ENCODE measurements at regions of chr2 and their contacts with region 1.

Region 1: GRCh38 chr2:191013932-191014652 is at the start of gene STAT1:
- DNase-seq: peak; percentile 93
- ATAC-seq: peak; percentile 94
- H3K4me3 ChIP-seq: peak within 1 kb of the TSS; percentile 82
- H3K27ac ChIP-seq: peak within 1 kb of the TSS; percentile 82
- H3K4me1 ChIP-seq: peaks cover 12% of the 10 kb centered on the region
- H3K27me3 ChIP-seq: no peaks in the 10 kb centered on the region
- CTCF ChIP-seq: no peak
- POLR2A ChIP-seq: peak; percentile 96
- RAD21 ChIP-seq: peak; percentile 30; the same call in 1 of the 2 replicates
- total RNA-seq, gene STAT1: 67.9 and 80.3 TPM in 2 replicates

Region 2: GRCh38 chr2:191150600-191151330 is 136.7 kb after region 1 on chr2 and contains the start of gene STAT4:
- CTCF ChIA-PET with region 1: no interaction called
- POLR2A ChIA-PET with region 1: no interaction called
- dilution Hi-C with region 1: no loop called
- in situ Hi-C with region 1: no loop called
- intact Hi-C with region 1: loop called (anchors 1 kb)
- DNase-seq: peak; percentile 47
- ATAC-seq: peak; percentile 48
- H3K4me3 ChIP-seq: peak within 1 kb of the TSS; percentile 41
- H3K27ac ChIP-seq: no peak within 1 kb of the TSS
- H3K4me1 ChIP-seq: no peaks in the 10 kb centered on the region
- H3K27me3 ChIP-seq: peaks cover 1% of the 10 kb centered on the region; the same call in 1 of the 2 replicates
- CTCF ChIP-seq: no peak
- POLR2A ChIP-seq: no peak
- RAD21 ChIP-seq: no peak
- total RNA-seq, gene STAT4: 0.28 and 0.36 TPM in 2 replicates

Region 3: DNA sequence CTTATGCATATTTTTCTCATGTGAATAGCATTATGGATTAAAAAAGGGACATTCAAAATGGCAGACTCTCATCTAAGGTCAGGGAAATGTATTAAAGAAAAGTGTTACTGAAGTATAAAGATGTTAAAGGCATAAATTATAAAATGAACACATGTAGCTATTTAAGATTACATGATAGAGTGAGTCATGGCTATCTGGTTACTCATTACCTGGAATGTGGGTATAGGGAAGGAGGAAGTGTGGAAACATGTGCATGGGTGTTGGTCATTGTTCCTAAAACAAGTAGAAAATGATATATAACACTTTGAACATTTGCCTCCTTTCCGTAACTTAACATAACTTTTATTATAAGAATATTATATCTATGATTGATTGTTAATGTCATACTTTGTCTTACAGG is 297.5 kb after region 1 on chr2:
- CTCF ChIA-PET with region 1: no interaction called
- POLR2A ChIA-PET with region 1: no interaction called
- dilution Hi-C with region 1: no loop called
- in situ Hi-C with region 1: no loop called
- intact Hi-C with region 1: no loop called
- DNase-seq: peak; percentile 88
- ATAC-seq: peak; percentile 27; the same call in 1 of the 2 replicates
- H3K4me3 ChIP-seq: no peak overlapping the region
- H3K27ac ChIP-seq: no peak overlapping the region
- H3K4me1 ChIP-seq: peaks cover 11% of the 10 kb centered on the region
- H3K27me3 ChIP-seq: no peaks in the 10 kb centered on the region
- CTCF ChIP-seq: no peak
- POLR2A ChIP-seq: no peak
- RAD21 ChIP-seq: no peak